ENCODE measurements at regions of chr16 and their contacts with region 1.

Region 1: DNA sequence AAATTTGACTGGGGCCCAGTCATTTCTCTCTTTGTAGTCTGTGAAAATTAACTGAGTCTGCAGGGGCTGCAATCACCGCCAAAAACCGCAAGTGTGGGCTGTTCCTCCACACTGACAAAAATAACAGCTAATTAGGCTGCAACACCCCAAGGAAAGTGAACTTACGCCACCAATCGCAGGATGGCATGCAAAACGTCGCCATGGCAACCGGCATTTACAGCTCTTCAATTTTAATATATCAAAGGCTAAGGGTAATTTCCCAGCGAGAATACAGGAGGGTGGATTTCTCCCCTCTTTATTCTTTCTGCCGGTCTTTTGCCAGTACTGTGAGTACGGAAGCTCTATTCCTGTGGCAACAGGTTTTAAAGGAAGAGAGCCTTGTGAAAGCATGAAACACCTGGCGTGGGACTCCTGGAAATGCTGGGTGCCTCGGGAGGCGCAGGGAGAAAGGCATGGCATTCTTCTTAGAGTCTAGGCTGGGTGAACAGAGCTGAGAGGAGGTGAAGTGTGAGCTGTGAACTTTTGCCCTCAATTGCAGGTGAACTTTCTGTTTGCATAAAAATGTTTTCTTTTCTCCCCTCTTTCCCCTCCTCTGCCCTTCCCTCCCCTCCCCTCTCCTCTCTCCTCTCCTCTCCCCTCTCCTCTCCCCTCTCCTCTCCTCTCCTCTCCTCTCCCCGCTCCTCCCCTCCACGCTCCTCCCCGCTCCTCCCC is 399.7 kb downstream of the XYLT1 start:
- DNase-seq: peak; percentile 87
- H3K4me3 Mint-ChIP-seq: peak overlapping the region; percentile 28
- H3K27ac Mint-ChIP-seq: peak overlapping the region; percentile 68
- H3K4me1 Mint-ChIP-seq: peaks cover 20% of the 10 kb centered on the region
- H3K27me3 Mint-ChIP-seq: no peaks in the 10 kb centered on the region

Region 2: DNA sequence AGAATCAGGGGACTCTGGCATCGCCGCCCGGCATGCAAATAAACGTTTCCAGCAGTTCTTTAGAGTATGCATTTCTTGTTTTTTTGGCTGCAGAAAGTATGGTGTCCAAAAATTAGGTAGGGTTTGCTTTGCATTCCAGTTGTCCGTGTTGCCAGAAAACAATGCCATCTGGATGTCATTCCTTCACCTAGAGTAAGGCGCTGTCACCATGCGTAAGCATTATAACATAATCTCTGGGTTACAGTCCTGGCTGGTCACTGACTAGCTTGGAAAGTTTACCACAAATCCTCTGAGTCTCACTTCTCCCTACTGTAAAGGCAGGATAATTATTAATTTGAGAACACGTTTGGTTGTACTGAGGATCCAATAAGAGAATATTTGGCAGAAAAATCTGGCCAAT is 58.0 kb before region 1 on chr16:
- CTCF ChIA-PET with region 1: no interaction called
- intact Hi-C with region 1: loop called (anchors 1 kb)
- DNase-seq: no peak
- H3K4me3 Mint-ChIP-seq: peak overlapping the region; percentile 76
- H3K27ac Mint-ChIP-seq: no peak overlapping the region
- H3K4me1 Mint-ChIP-seq: peaks cover 15% of the 10 kb centered on the region
- H3K27me3 Mint-ChIP-seq: no peaks in the 10 kb centered on the region

Region 3: GRCh38 chr16:17160285-17160853 is 89.3 kb after region 1 on chr16:
- CTCF ChIA-PET with region 1: no interaction called
- intact Hi-C with region 1: no loop called
- DNase-seq: no peak
- H3K4me3 Mint-ChIP-seq: no peak overlapping the region
- H3K27ac Mint-ChIP-seq: no peak overlapping the region
- H3K4me1 Mint-ChIP-seq: no peaks in the 10 kb centered on the region
- H3K27me3 Mint-ChIP-seq: no peaks in the 10 kb centered on the region